CD8-positive, alpha-beta T cell (primary cell): ENCODE measurements at regions of chr6 and their contacts with region 1.

Region 1: DNA sequence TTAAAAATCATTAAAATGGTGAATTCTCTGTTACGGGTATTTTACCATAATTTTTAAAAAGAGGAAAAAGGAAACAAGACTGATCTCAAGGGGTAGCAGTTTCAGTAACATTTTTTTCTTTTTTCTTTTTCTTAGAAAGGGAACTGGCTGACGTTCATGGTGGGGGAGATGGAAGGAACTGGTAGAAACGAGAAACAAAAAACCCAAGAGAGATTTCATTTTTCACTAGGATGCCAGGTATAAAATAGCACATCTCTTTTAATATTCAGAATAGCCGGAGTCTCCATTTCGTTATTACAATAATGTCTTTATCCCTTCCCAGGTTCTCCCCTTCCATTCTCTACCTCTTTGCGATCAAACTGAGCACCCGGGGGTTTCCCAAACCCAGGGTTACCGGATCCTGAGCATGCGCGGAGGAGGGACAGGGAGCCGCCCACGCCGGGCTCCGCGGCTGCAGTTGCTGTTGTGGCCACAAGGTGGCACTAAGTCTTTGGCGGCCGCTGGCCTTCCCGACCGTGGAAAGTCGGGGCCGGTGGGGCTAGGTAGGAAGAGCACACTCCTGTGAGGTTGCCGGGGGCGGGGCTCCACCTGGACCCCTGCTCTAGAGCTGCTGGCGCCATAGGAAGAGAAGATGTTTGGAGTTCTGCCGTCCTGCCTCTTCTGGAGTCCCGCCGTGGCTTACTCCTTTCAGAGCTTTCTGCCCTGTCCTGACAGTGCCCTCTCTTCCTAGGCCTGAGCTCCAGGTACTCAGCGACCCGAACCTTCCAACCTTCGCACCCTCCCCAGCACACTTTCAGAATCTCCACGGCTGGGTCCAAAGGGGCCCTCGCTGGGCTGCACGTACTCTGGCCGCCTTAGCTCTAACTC is 146.8 kb downstream of the SH3BGRL2 start:
- DNase-seq: peak; percentile 65 to 90 (median 82)
- ATAC-seq: peak; percentile 97
- H3K4me3 ChIP-seq: peak overlapping the region; percentile 36 to 38
- H3K4me3 Mint-ChIP-seq: peak overlapping the region; percentile 78
- H3K27ac ChIP-seq: no peak overlapping the region
- H3K27ac Mint-ChIP-seq: no peak overlapping the region
- H3K4me1 ChIP-seq: peaks cover 4% of the 10 kb centered on the region
- H3K4me1 Mint-ChIP-seq: peaks cover 6% of the 10 kb centered on the region
- H3K27me3 ChIP-seq: no peaks in the 10 kb centered on the region
- H3K27me3 Mint-ChIP-seq: peaks cover 2% of the 10 kb centered on the region
- CTCF ChIP-seq: peak; percentile 94

Region 2: GRCh38 chr6:79747865-79748264 is 30.1 kb before region 1 on chr6:
- CTCF ChIA-PET with region 1: no interaction called
- POLR2A ChIA-PET with region 1: no interaction called
- intact Hi-C with region 1: no loop called
- DNase-seq: no peak
- ATAC-seq: no peak
- H3K4me3 ChIP-seq: no peak overlapping the region
- H3K4me3 Mint-ChIP-seq: no peak overlapping the region
- H3K27ac ChIP-seq: no peak overlapping the region
- H3K27ac Mint-ChIP-seq: no peak overlapping the region
- H3K4me1 ChIP-seq: no peaks in the 10 kb centered on the region
- H3K4me1 Mint-ChIP-seq: no peaks in the 10 kb centered on the region
- H3K27me3 ChIP-seq: no peaks in the 10 kb centered on the region
- H3K27me3 Mint-ChIP-seq: peaks cover 12% of the 10 kb centered on the region
- CTCF ChIP-seq: no peak

Region 3: GRCh38 chr6:79813854-79814709 is 36.1 kb after region 1 on chr6:
- CTCF ChIA-PET with region 1: interaction called, 5 read pairs
- POLR2A ChIA-PET with region 1: no interaction called
- intact Hi-C with region 1: loop called in 1 of 2 experiments (anchors 1 kb)
- DNase-seq: peak; percentile 6 to 70 (median 59)
- ATAC-seq: no peak
- H3K4me3 ChIP-seq: no peak overlapping the region
- H3K4me3 Mint-ChIP-seq: no peak overlapping the region
- H3K27ac ChIP-seq: no peak overlapping the region
- H3K27ac Mint-ChIP-seq: no peak overlapping the region
- H3K4me1 ChIP-seq: no peaks in the 10 kb centered on the region
- H3K4me1 Mint-ChIP-seq: no peaks in the 10 kb centered on the region
- H3K27me3 ChIP-seq: no peaks in the 10 kb centered on the region
- H3K27me3 Mint-ChIP-seq: peaks cover 3% of the 10 kb centered on the region
- CTCF ChIP-seq: peak; percentile 88